ENCODE measurements at regions of chr7 and their contacts with region 1.

Region 1: GRCh38 chr7:2116989-2117591 is 115.7 kb downstream of the MAD1L1 start:
- DNase-seq: peak in 4 of 5 donors; percentile 78 to 89 (median 82)
- ATAC-seq: peak; percentile 72 to 81 (median 80)
- H3K4me3 ChIP-seq: no peak overlapping the region
- H3K27ac ChIP-seq: peak overlapping the region; percentile 4 to 80 (median 68)
- H3K4me1 ChIP-seq: peaks cover 0 to 61% (median 38%) of the 10 kb centered on the region in 12 donors
- H3K27me3 ChIP-seq: no peaks in the 10 kb centered on the region
- CTCF ChIP-seq: peak in 2 of 12 donors; percentile 25 to 27
- POLR2A ChIP-seq: no peak

Region 2: GRCh38 chr7:2082139-2082998 is 34.7 kb before region 1 on chr7:
- intact Hi-C with region 1: no loop called
- DNase-seq: peak in 1 of 5 donors; percentile 76
- ATAC-seq: peak in 2 of 4 donors; percentile 49 to 81
- H3K4me3 ChIP-seq: no peak overlapping the region
- H3K27ac ChIP-seq: no peak overlapping the region
- H3K4me1 ChIP-seq: no peaks in the 10 kb centered on the region
- H3K27me3 ChIP-seq: no peaks in the 10 kb centered on the region
- CTCF ChIP-seq: no peak
- POLR2A ChIP-seq: no peak

Region 3: DNA sequence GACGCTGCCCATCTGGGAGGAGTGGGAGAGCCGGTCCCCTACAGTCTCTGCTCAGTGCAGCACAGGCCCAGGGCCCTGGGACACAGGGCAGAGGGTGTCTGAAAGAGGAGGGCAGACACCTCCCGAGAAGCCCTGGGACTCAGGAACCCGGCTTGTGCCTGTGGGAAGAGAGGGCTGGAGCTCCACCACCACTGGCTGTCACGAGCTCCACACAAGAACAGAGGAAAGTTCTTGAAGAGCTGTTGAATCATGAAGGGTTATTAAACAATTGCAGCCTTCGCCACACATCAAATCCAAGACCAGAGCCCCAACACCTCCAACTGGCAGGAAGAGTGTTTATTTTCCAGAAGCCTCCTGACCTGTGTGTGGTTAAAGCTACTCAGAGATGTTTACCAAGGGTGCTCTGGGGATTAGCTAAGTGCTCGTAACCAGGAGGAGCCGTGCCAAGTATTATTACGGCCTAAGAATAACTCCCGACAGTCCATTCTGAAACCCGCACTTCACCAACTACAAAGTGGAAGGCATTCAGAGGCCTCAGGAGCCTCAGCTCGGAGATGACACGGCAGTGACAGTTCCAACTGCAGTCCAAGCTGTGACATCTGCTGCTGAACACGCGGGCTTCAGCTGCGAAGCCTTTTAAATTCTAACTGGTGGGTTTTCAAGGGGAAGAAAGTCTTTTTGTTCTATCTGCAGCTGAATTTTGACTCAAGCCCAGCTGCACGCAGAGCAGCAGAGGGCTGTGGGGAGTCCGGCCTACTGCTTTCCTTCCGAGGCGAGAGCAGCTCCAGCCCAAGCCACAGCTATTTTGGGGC is 40.6 kb after region 1 on chr7:
- intact Hi-C with region 1: loop called in 1 of 10 experiments (anchors 5 kb)
- DNase-seq: peak in 4 of 5 donors; percentile 52 to 79 (median 66)
- ATAC-seq: peak; percentile 81 to 97 (median 90)
- H3K4me3 ChIP-seq: no peak overlapping the region
- H3K27ac ChIP-seq: peak overlapping the region; percentile 24 to 86 (median 68)
- H3K4me1 ChIP-seq: peaks cover 4 to 27% (median 20%) of the 10 kb centered on the region in 12 donors
- H3K27me3 ChIP-seq: no peaks in the 10 kb centered on the region
- CTCF ChIP-seq: no peak
- POLR2A ChIP-seq: no peak

Region 4: DNA sequence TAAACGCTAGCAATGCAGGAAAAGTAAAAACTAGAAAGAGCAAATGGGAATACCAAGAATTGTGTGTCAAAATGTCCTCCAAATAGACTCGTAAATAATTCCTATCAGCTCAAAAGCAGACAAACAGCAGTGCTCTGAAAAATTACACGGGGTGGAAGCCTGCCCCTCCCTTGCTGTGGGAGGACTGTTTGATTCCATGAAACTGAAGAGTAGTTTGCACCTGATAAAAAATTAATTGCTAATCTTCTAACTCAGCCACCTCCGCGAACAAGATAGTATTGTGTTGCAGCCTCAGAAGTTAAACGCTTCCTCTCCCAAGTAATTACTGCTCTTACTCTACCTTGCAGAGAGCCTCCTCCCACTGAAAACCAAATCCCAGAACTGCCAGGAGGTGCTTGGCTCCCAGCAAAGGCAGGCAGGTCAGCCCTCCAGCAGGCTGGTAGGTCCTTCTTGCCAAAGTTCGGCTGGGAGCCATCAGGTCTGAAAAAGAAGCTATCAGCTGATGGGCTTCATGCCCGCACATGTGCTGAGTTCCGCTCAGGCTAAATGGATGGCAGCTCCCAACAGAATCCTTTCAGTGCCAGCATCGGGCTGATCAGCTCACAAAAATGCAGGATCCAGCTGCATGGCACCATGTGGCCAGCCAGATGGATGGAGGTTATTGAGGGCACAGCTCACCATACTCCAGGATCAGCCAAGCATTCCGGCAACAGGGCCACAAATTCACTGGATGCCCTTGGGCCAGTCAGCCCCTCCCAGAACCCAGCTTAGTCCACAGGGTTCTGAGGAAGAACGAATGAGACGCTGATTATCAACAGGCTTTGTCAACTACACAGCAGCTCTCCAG is 78.5 kb after region 1 on chr7:
- intact Hi-C with region 1: loop called in 1 of 10 experiments (anchors 5 kb)
- DNase-seq: peak in 4 of 5 donors; percentile 48 to 81 (median 58)
- ATAC-seq: peak; percentile 46 to 73 (median 52)
- H3K4me3 ChIP-seq: no peak overlapping the region
- H3K27ac ChIP-seq: peak overlapping the region in 10 of 12 donors; percentile 14 to 66 (median 45)
- H3K4me1 ChIP-seq: peaks cover 0 to 29% (median 15%) of the 10 kb centered on the region in 12 donors
- H3K27me3 ChIP-seq: no peaks in the 10 kb centered on the region
- CTCF ChIP-seq: no peak
- POLR2A ChIP-seq: no peak

Region 5: GRCh38 chr7:3294432-3295100 is 1177.5 kb after region 1 on chr7:
- intact Hi-C with region 1: no loop called
- DNase-seq: no peak
- ATAC-seq: no peak
- H3K4me3 ChIP-seq: no peak overlapping the region
- H3K27ac ChIP-seq: no peak overlapping the region
- H3K4me1 ChIP-seq: no peaks in the 10 kb centered on the region
- H3K27me3 ChIP-seq: peaks cover 0 to 16% (median 0%) of the 10 kb centered on the region in 9 donors
- CTCF ChIP-seq: no peak
- POLR2A ChIP-seq: no peak

Measured in heart left ventricle (tissue), 16 donors.